Dendritic cell treated with granulocyte-macrophage colony-stimulating factor and Interleukin-4, amounts not matched to agents 40 ng/mL and 50 ng/mL, for 4 days (primary cell): ENCODE measurements at regions of chr15 and their contacts with region 1.

Region 1: DNA sequence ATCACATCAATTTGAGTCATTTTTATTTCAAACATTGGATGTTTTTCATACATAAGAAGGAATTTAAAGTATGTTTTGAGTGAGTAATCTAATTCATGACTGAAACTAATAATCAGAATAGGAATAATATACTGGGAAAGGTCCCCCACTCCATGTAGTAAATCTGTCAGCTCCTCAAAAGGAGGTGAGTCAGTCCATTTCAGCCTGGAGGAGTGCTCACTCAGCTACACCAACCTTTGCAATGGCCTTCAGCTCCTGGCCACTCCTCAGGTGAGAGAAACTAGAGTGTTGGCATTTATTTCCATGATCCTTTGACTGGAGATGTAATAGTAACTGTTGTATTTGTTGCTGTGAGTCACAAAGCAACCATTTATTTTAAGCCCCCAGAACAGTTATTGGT is 744.9 kb upstream of the ARRDC4 start:
- H3K4me3 Mint-ChIP-seq: no peak overlapping the region
- H3K27ac Mint-ChIP-seq: no peak overlapping the region
- H3K4me1 Mint-ChIP-seq: no peaks in the 10 kb centered on the region
- H3K27me3 Mint-ChIP-seq: no peaks in the 10 kb centered on the region

Region 2: DNA sequence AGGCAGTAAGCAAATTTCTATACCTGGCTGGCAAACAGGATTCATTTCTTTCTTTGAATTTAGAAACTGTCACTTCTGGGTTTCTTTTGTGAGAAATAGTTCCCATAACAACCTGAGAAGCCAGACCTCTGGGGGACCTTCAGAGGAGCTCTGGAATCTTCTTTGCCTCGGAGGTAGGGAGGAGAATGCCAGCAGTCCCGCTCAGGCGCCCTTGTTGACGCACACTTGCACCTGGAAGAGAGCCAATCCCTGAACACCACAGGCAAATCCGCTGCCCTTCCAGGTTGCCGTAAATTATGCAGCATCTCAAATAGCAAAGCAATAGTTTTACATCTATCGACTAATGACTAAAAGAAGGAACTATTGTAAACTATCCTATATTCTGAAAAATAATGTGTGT is 56.6 kb before region 1 on chr15:
- intact Hi-C with region 1: loop called (anchors 10 kb)
- H3K4me3 Mint-ChIP-seq: no peak overlapping the region
- H3K27ac Mint-ChIP-seq: no peak overlapping the region
- H3K4me1 Mint-ChIP-seq: no peaks in the 10 kb centered on the region
- H3K27me3 Mint-ChIP-seq: no peaks in the 10 kb centered on the region

Region 3: DNA sequence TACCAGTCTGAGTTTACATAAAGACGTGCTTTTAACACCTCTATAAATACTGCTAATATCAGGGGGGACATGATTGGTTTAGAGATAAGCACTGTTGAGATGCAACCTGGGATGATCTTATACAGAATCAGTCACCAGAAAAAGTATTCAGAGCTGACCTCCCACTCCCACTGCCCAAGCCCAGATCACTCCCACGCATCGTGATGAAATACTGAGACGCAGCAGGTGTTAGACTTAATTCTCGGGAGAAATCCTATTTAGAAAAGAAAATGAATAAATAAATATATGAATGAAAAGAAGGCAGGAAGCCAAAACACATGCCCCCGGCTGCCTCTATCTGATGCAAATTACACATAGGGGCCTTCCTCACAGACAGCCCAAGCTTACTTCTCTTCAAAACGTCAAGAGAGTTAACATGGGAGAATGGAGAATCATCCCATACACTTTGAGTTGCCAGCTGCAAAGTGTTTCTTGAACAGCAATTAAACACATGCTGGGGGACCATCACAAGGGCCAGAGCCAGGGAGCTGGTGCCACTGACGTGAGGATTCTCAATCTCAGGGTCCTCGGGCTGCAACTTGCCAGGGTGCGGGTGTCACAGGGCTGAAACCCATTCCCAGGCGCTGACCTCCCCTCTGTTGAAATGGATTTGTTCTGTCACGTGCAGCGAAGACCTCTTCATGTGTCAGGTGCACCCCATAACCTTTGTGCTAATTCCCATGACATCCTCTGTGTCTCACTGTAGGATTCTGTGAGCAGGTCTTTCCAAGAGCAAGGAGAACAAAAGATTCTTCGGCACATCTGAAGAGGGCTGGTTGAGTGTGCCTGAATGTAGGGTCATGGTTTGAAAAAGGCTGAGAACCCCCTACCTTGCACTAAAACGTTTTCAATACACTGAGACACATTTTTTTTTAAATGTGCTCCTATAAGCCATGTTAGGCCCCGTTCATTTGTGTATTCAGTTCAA is 19.3 kb before region 1 on chr15:
- intact Hi-C with region 1: no loop called
- H3K4me3 Mint-ChIP-seq: no peak overlapping the region
- H3K27ac Mint-ChIP-seq: no peak overlapping the region
- H3K4me1 Mint-ChIP-seq: no peaks in the 10 kb centered on the region
- H3K27me3 Mint-ChIP-seq: no peaks in the 10 kb centered on the region